Activated T-helper 2 cell treated with anti-CD3 and anti-CD28 coated beads, Interferon-gamma antibody, Interleukin-2, Interleukin-4, amounts not matched to agents 10 μg/mL and 5 μg/mL and 100 μg/mL, durations not matched to agents 14 hours and 24 hours and 36 hours (primary cell): ENCODE measurements at regions of chr1 and their contacts with region 1.

Region 1: DNA sequence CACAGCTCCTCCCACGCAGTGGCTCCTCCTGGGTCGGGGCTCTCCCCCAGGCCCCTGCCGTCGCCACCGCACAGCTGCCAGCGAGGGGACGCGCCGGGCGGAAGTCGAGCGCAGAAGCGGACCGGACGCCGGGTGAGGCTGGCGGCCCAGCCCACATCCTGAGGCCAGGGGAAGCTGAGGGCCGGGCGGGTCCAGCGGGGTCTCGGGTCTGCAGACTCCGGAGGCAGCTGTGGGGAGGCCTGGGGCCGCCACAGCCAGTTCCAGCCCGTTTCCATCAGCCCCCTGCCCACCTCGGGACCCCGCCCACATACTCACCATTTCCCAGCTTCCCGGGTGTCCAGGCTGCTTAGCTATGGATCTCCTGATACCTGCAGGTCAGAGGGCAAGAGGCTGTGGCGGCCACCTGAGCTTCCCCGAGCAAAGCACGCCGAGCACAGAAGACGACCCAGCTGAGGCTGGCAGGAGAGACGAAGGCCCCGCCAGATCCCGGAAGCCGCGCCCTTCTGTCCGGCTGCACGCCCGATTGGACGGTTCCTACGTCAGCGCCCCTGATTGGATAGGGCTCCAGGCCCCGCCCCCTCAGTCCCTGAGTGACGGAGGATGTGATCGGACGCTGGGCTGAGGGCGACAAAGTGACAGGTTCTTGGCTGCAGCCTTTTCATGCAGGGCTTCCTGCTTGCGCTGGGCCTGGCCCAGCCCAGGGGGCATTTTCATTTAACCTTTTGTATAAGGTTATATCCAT is 38.7 kb upstream of the ZNF124 start:
- DNase-seq: peak; percentile 94
- H3K4me3 Mint-ChIP-seq: peak overlapping the region; percentile 86
- H3K27ac Mint-ChIP-seq: peak overlapping the region; percentile 93
- H3K4me1 Mint-ChIP-seq: peaks cover 48% of the 10 kb centered on the region
- H3K27me3 Mint-ChIP-seq: no peaks in the 10 kb centered on the region

Region 2: DNA sequence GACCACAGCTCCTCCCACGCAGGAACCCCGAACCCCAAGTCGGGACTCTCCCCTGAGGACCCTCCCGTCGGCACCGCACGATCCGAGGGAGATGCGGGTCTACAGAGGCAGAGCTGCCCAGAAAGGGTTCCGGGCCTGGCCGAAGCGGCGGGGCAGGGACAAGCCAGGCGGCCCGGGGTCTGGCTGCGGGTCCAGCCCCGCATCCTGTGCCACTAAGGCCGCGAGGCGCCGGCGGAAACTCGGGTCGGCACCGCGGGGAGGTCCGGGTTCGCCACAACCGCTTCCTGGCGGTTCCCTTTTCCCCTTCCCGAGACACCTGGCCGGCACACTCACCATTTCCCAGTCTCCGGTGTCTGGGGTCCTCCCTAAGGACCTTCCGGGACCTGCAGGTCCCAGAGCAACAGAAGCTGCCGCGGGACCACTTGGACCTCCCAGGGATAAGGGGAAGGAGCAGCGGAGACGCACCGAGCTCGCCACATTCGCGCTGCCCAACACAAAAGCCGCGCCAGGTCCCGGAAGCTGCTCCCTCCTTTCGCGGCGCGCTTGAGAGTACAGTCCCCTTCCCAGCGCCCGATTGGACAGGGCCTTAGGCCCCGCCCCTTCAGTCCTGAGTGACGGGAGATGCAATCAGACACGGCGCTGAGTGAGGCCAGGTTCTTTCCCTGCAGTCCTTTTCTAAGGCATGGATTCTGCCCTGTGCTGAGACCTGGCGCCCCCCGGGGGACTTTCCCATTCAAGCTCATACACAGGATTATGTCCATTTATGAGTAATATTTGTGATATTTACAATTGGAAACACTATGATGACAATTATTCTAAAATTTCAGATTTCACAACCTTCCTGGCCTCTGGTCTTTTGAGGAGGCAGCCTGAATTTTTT is 132.0 kb before region 1 on chr1 and contains the start of gene ZNF670:
- intact Hi-C with region 1: loop called (anchors 2 kb)
- DNase-seq: peak; percentile 84
- H3K4me3 Mint-ChIP-seq: peak within 1 kb of the TSS; percentile 88
- H3K27ac Mint-ChIP-seq: peak within 1 kb of the TSS; percentile 84
- H3K4me1 Mint-ChIP-seq: peaks cover 20% of the 10 kb centered on the region
- H3K27me3 Mint-ChIP-seq: peaks cover 5% of the 10 kb centered on the region
- total RNA-seq, gene ZNF670: 2.3 and 3.0 TPM in 2 replicates

Region 3: DNA sequence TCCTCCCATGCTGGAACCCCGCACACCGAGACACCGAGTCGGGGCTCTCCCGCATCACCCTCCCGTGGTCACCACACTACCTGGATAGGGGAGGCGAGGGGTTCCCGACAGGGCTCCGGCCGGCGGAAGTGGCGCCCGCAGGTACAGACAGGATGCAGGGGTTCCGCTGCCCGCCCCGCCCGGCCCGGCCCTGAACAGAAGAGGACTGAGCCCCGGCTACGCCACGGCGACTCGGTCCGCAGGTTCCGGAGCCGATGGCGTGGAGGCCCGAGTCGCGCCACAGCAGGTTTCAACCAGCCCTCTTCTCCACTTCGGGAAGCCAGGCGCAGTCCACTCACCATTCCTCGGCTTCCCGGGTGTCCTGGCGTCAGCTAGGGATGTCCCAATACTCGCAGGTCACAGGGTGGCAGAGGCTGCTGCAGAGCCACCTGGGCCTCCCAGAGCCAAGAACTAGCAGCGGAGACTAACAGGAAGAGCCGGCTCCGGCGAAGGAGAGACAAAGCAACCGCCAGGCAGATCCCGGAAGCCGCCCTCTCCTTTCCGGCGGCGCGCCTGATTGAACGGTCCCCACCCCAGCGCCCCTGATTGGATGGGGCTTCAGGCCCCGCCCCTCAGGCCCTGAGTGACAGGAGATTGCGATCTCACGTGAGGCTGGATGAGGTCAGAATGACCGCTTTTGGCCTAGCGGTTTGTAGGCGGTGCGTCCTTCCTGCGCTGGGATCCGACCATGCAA is 106.5 kb before region 1 on chr1 and contains the start of gene ZNF669:
- intact Hi-C with region 1: loop called (anchors 2 kb)
- DNase-seq: peak; percentile 88
- H3K4me3 Mint-ChIP-seq: peak within 1 kb of the TSS; percentile 91
- H3K27ac Mint-ChIP-seq: peak within 1 kb of the TSS; percentile 82
- H3K4me1 Mint-ChIP-seq: peaks cover 5% of the 10 kb centered on the region
- H3K27me3 Mint-ChIP-seq: peaks cover 29% of the 10 kb centered on the region
- total RNA-seq, gene ZNF669: 8.2 and 8.7 TPM in 2 replicates

Region 4: DNA sequence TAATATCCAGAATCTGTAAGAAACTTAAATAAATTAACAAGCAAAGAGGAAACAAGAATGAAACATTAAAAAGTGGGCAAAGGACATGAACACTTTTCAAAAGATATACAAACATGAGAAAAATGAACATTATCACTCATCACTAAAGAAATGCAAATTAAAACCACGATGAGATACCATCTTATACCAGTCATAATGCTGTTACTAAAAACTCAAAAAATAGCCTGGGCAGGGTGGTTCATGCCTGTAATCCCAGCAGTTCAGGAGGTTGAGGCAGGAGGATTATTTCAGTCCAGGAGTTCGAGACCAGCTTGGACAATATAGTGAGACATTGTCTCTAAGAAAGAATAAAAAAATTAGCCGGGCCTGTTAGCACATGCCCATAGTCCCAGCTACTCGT is 44.9 kb before region 1 on chr1:
- intact Hi-C with region 1: loop called (anchors 5 kb)
- DNase-seq: no peak
- H3K4me3 Mint-ChIP-seq: no peak overlapping the region
- H3K27ac Mint-ChIP-seq: no peak overlapping the region
- H3K4me1 Mint-ChIP-seq: peaks cover 9% of the 10 kb centered on the region
- H3K27me3 Mint-ChIP-seq: no peaks in the 10 kb centered on the region

Region 5: DNA sequence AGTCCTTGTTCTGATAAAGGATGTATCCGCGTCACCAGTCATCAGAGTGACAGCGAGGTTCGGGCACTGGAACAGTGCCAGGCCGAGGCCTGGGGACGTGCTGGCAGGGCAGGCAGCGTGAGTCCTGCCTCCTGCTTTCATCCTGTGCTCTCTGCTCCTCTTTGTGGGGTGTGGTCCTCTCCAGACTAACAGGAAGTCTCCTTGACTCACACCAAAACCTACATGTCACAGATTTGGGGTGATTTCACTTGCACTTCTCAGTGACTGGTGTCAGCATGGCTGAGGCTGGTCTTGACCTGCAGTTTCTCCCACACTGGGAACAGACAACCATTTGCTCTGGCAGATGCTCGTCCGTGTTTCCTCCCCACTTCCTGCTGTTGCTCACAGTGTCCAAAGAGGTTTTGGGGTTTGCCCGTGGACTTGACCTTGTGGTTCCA is 196.7 kb after region 1 on chr1:
- intact Hi-C with region 1: loop called (anchors 10 kb)
- DNase-seq: peak; percentile 53
- H3K4me3 Mint-ChIP-seq: peak overlapping the region; percentile 28
- H3K27ac Mint-ChIP-seq: peak overlapping the region; percentile 16
- H3K4me1 Mint-ChIP-seq: peaks cover 36% of the 10 kb centered on the region
- H3K27me3 Mint-ChIP-seq: peaks cover 35% of the 10 kb centered on the region